ENCODE measurements at regions of chr12 and their contacts with region 1.

Region 1: GRCh38 chr12:6613776-6614512 is 6.8 kb upstream of the CHD4 start:
- DNase-seq: peak; percentile 97
- ATAC-seq: peak; percentile 88
- H3K4me3 ChIP-seq: peak overlapping the region; percentile 11 to 70 (median 41); a peak in 5 of 6 replicates
- H3K27ac ChIP-seq: peak overlapping the region; percentile 74
- H3K4me1 ChIP-seq: peaks cover 41% of the 10 kb centered on the region
- H3K27me3 ChIP-seq: no peaks in the 10 kb centered on the region
- CTCF ChIP-seq: peak; percentile 75
- EP300 ChIP-seq: no peak
- POLR2A ChIP-seq: peak; percentile 41 to 75; a peak in 3 of 4 replicates
- RAD21 ChIP-seq: no peak

Region 2: GRCh38 chr12:6563448-6564050 is 50.4 kb before region 1 on chr12:
- CTCF ChIA-PET with region 1: interaction called, 3 read pairs
- POLR2A ChIA-PET with region 1: interaction called, 11 read pairs
- in situ Hi-C with region 1: no loop called
- intact Hi-C with region 1: no loop called
- DNase-seq: peak; percentile 54
- ATAC-seq: peak; percentile 59
- H3K4me3 ChIP-seq: no peak overlapping the region
- H3K27ac ChIP-seq: no peak overlapping the region
- H3K4me1 ChIP-seq: peaks cover 14% of the 10 kb centered on the region
- H3K27me3 ChIP-seq: no peaks in the 10 kb centered on the region
- CTCF ChIP-seq: peak; percentile 74
- EP300 ChIP-seq: no peak
- POLR2A ChIP-seq: no peak
- RAD21 ChIP-seq: peak; percentile 41; the same call in 1 of the 2 replicates

Region 3: DNA sequence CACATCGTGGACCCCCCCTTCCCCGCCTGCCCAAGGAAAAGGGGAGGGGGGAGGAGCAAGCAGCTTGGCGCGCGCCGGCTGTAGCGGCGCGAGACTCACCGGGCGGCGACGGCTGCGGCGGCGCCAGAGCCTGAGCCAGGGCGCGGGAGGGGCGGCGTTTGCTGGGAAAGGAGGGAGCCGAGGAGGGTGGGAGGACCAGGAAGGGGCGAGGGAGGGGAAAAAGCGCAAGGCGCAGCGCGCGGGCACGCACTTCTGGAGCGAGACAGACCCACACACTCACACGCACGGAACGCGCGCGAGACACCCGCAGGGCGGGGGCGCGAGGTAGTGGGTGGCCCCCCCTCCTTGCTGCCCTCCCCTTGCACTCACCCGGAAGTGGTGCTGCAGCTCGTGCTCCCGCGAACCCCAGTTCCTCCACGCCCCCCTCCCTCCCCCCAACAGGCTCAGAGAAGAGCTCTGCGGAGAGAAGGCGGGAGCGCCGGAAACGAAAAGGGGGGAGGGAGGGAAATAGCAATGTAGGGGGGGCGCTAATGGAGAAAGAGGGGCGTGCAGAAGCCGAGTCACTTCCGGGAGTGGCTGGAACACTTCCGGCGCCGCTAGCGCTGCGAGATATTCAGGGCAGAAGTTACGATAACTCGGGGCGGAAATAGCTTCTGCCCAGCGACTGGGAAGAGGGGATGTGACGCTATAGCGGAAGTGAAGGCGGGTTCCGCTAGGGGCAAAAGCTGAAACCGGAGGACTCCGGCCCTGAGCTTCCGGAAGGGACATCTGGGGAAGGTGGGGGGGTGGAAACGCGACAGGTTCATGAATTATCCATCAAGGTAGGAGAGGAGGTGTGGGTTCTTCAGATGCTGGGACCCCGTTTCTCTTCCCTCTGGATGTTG is 75.3 kb after region 1 on chr12 and contains the start of gene ZNF384:
- CTCF ChIA-PET with region 1: interaction called, 15 read pairs
- POLR2A ChIA-PET with region 1: interaction called, 30 read pairs
- in situ Hi-C with region 1: no loop called
- intact Hi-C with region 1: loop called (anchors 2 kb)
- DNase-seq: peak; percentile 99
- ATAC-seq: peak; percentile 88
- H3K4me3 ChIP-seq: peak within 1 kb of the TSS; percentile 88 to 99 (median 89)
- H3K27ac ChIP-seq: peak within 1 kb of the TSS; percentile 98
- H3K4me1 ChIP-seq: peaks cover 51% of the 10 kb centered on the region
- H3K27me3 ChIP-seq: peaks cover 0 to 3% of the 10 kb centered on the region in 2 experiments; a peak in 3 of 5 replicates
- CTCF ChIP-seq: peak; percentile 31
- EP300 ChIP-seq: peak in 1 of 2 experiments; percentile 46; a peak in 2 of 4 replicates
- POLR2A ChIP-seq: peak; percentile 57 to 76
- RAD21 ChIP-seq: no peak
- total RNA-seq, gene ZNF384: 23.6 and 24.1 TPM in 2 replicates

Region 4: GRCh38 chr12:6723607-6724396 is 109.9 kb after region 1 on chr12 and contains the start of gene COPS7A:
- CTCF ChIA-PET with region 1: no interaction called
- POLR2A ChIA-PET with region 1: interaction called, 22 read pairs
- in situ Hi-C with region 1: no loop called
- intact Hi-C with region 1: no loop called
- DNase-seq: peak; percentile 97
- ATAC-seq: peak; percentile 97
- H3K4me3 ChIP-seq: peak within 1 kb of the TSS; percentile 65 to 93 (median 74)
- H3K27ac ChIP-seq: peak within 1 kb of the TSS; percentile 82
- H3K4me1 ChIP-seq: peaks cover 31% of the 10 kb centered on the region
- H3K27me3 ChIP-seq: no peaks in the 10 kb centered on the region
- CTCF ChIP-seq: peak; percentile 66
- EP300 ChIP-seq: peak in 1 of 2 experiments; percentile 58; a peak in 1 of 4 replicates
- POLR2A ChIP-seq: peak; percentile 68 to 85
- RAD21 ChIP-seq: peak; percentile 36; the same call in 1 of the 2 replicates
- total RNA-seq, gene COPS7A: 38.0 and 40.0 TPM in 2 replicates

Region 5: GRCh38 chr12:6873094-6874014 is 259.4 kb after region 1 on chr12 and contains the start of gene SPSB2:
- CTCF ChIA-PET with region 1: no interaction called
- POLR2A ChIA-PET with region 1: interaction called, 12 read pairs
- in situ Hi-C with region 1: no loop called
- intact Hi-C with region 1: no loop called
- DNase-seq: peak; percentile 94
- ATAC-seq: peak; percentile 81
- H3K4me3 ChIP-seq: peak within 1 kb of the TSS; percentile 74 to 95 (median 76)
- H3K27ac ChIP-seq: peak within 1 kb of the TSS; percentile 79
- H3K4me1 ChIP-seq: peaks cover 48% of the 10 kb centered on the region
- H3K27me3 ChIP-seq: no peaks in the 10 kb centered on the region; a peak in 1 of 5 replicates
- CTCF ChIP-seq: no peak
- EP300 ChIP-seq: 0 out of 4 replicates have a peak, but pooled peaks of 1 of the 2 experiments have one; percentile 5
- POLR2A ChIP-seq: no peak; a peak in 1 of 4 replicates
- RAD21 ChIP-seq: no peak
- total RNA-seq, gene SPSB2: 4.0 and 6.2 TPM in 2 replicates